K562 (cell line): ENCODE measurements at regions of chr5 and their contacts with region 1.

Region 1: DNA sequence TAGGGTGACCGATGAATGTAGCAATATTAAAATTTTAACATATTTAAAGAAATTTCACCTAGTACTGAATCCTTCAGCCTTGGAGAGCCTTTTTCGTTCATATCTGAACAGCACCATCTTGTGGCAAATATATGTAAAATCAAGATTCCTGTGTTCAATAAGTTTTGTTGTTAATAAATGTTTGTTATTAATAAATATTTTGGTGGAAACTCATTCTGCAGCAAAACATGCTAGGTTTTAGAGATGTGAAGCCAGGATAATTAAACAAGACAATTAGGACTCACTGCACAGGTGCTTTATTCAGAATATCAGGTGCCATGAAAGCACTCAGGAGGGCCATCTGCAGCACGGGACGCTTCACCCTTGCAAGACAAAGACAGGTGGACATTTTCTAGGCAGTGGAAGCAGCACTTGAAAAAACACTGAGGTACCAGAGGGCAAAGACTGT is 15.7 kb downstream of the TICAM2 start:
- DNase-seq: peak; percentile 14 to 25 (median 16)
- ATAC-seq: peak; percentile 53; the same call in 1 of the 3 replicates
- H3K4me3 ChIP-seq: no peak overlapping the region
- H3K27ac ChIP-seq: no peak overlapping the region
- H3K4me1 ChIP-seq: no peaks in the 10 kb centered on the region
- H3K27me3 ChIP-seq: no peaks in the 10 kb centered on the region
- CTCF ChIP-seq: peak in 2 of 3 experiments; percentile 43 to 60; a peak in 4 of 6 replicates
- EP300 ChIP-seq: no peak
- POLR2A ChIP-seq: no peak
- RAD21 ChIP-seq: peak; percentile 70 to 72

Region 2: GRCh38 chr5:115309751-115310370 is 276.8 kb before region 1 on chr5:
- CTCF ChIA-PET with region 1: interaction called, 31 read pairs
- POLR2A ChIA-PET with region 1: no interaction called
- in situ Hi-C with region 1: no loop called
- intact Hi-C with region 1: loop called (anchors 2 kb)
- DNase-seq: peak in 3 of 4 experiments; percentile 12 to 49 (median 15)
- ATAC-seq: peak; percentile 70
- H3K4me3 ChIP-seq: no peak overlapping the region
- H3K27ac ChIP-seq: no peak overlapping the region
- H3K4me1 ChIP-seq: no peaks in the 10 kb centered on the region
- H3K27me3 ChIP-seq: no peaks in the 10 kb centered on the region
- CTCF ChIP-seq: peak in 1 of 3 experiments; percentile 70; a peak in 3 of 6 replicates
- EP300 ChIP-seq: no peak
- POLR2A ChIP-seq: no peak
- RAD21 ChIP-seq: peak; percentile 87 to 91